Transverse colon (tissue), 4 donors: ENCODE measurements at regions of chr9 and their contacts with region 1.

Region 1: DNA sequence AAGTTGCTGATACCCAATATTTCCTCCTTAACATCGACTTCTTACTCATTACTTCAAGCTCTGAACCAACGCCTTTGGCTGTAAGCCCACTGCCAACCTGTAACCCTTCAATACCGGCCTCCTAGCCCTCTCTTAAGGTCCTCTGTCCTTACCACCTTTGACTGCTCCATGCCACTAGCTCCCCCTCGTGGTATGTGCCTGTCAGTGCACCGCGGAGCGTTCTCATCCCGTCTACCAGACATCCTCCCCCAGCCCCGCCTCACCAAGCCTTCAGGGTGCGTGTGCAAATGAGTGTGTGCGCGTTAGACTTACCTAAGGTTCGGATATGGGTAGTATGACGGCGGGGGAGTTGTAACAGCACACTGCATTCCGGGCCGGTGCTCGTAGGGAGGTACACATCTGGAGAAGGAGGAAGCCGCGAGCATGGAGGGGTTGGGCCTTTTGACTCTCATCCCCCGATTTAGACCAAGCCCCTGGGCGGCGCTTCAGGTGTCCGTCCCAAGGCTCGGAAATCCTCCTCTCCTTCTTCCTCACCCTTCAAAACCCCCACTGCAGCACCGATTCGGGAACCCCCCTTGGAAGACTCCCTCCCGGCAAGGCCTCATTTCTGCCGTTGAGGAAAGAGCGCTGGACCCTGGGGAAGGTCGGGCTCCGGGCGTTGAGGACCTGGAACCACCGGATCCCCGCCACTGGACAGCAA is 2.8 kb upstream of the MYORG start:
- DNase-seq: peak; percentile 94
- H3K4me3 ChIP-seq: peak overlapping the region; percentile 3 to 45 (median 28)
- H3K27ac ChIP-seq: peak overlapping the region; percentile 74 to 86 (median 78)
- H3K4me1 ChIP-seq: peaks cover 17 to 37% (median 31%) of the 10 kb centered on the region in 4 donors
- H3K27me3 ChIP-seq: no peaks in the 10 kb centered on the region
- CTCF ChIP-seq: peak; percentile 96 to 99 (median 98)
- EP300 ChIP-seq: no peak
- POLR2A ChIP-seq: peak; percentile 41

Region 2: DNA sequence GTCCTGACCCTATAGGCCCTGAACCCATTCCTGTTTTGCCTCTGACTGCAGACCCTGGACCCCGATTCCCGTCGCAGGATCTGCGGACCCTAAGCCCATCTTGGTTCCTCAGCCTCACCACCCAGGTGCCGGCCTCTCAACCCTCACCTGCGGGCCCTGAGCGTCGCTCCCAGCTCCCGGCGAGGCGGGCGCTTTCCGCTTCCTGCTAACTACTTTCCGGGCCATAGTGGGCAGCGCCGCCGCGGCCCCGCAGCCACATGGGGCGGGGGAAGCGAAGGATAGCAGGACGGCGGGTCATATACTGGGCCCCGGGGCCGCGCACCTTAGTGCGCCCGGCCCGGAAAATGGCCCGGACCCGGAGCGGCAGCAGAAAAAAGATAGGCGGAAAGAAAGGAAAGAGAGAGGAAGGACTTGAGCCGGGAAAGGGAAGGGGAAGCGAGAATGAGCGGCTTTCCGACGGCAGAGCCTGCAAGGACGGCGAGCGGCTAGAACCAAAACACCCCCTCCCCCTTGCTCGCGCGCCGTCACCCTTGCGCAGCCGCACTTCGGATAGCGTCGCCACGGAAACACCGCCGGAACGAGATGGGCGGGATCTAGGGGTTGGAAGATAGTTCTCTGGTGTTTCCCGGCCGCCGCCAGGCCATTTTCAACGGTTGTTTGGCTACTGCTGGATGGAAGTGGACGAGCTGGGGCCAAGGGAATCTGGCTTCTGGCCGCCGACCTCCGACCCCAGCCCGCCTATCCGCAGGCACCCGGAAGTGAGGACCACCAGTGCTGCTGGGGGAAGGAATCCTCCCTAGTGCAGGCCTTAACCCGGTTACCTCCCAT is 253.1 kb before region 1 on chr9 and contains the start of gene DCAF12:
- in situ Hi-C with region 1: no loop called
- intact Hi-C with region 1: loop called (anchors 5 kb)
- DNase-seq: peak; percentile 93
- H3K4me3 ChIP-seq: peak within 1 kb of the TSS; percentile 60 to 88 (median 77)
- H3K27ac ChIP-seq: peak within 1 kb of the TSS; percentile 90 to 97 (median 94)
- H3K4me1 ChIP-seq: peaks cover 12 to 38% (median 18%) of the 10 kb centered on the region in 4 donors
- H3K27me3 ChIP-seq: no peaks in the 10 kb centered on the region
- CTCF ChIP-seq: peak in 1 of 5 experiments; percentile 23
- EP300 ChIP-seq: no peak
- POLR2A ChIP-seq: peak; percentile 83
- total RNA-seq, gene DCAF12: 22.1 to 29.7 (median 26.3) TPM

Region 3: DNA sequence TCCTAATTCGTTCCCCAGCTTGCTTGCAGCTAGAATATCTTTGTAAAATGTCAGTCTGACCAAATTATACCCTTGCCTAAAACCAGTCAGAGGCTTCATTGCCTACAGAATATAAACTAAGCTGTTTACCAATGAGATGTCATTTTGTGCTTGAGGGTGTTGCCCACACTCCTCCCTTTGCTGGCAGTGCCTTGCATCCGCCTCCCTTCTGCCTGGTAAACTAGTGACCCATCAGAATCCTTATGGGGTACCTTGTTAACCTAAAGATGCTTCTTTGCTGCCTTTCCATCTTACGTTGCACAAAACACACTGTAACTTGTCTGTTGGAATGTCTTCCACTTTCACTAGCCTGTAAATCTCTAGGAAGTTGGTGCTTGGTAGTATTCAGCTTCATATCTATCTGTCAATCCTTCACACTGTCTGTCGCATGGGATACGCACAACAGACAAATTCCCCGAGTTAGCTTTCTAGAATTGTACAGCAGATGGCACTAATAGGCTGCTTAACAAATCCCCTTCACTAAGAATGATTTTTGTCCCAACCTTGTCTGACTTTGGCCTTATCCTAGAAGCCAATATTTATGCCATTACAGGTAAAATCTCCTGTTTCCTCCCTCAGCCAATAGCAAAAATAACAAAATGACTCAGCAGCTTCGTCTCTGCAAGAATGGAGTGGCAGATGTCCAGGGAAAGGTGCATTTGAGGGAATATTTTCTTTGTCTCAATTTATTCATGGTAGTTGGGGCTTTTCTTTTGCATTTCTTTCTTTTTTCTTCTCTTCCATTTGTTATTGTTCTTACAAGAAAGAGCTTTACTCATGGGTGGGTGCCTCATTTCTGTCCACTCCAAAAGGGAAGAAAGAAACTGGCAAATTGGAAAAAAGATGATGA is 47.2 kb before region 1 on chr9:
- in situ Hi-C with region 1: loop called in 1 of 4 experiments (anchors 10 kb)
- intact Hi-C with region 1: loop called (anchors 2 kb)
- DNase-seq: no peak
- H3K4me3 ChIP-seq: no peak overlapping the region
- H3K27ac ChIP-seq: peak overlapping the region in 1 of 4 donors; percentile 46
- H3K4me1 ChIP-seq: peaks cover 13 to 20% (median 14%) of the 10 kb centered on the region in 4 donors
- H3K27me3 ChIP-seq: no peaks in the 10 kb centered on the region
- CTCF ChIP-seq: peak; percentile 48 to 69 (median 54)
- EP300 ChIP-seq: no peak
- POLR2A ChIP-seq: no peak

Region 4: DNA sequence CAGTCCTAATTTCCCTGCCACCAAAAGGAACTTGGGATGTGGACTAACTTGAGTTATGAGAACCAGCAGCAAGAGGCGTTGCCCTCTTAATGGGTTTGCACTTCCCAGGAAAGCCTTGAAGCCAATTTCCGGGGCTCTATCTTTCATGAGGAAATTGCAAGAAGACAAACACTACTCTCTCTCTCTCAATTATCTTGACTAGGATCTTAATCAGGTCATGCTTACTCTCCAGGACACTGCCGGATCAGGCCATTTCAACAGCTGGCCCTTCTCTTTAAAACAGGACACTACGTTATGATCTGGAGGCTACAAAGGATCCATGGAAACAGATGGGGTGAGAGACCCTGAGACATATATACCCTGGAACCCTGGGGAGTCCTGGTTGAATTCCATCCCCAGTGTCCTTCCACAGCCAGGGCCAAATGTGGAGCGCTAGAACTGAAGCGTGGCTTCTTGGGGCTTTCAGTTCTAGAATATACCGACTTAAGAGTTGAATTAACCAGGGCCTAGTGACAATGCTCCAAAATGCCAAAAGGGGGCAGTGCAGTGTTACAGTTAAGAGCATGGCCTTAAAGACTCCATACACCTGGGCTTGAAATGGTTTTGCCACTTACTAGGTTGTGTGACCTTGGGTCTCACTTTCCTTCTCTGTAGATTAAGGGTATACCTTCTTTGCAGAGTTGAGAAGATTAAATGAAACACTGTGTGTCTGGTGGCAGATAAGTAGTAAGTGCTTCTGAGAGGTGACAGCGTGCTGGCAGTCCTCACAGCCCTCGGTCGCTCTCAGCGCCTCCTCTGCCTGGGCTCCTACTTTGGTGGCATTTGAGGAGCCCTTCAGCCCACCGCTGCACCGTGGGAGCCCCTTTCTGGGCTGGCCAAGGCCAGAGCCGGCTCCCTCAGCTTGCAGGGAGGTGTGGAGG is 57.8 kb after region 1 on chr9:
- in situ Hi-C with region 1: no loop called
- intact Hi-C with region 1: no loop called
- DNase-seq: peak; percentile 62
- H3K4me3 ChIP-seq: no peak overlapping the region
- H3K27ac ChIP-seq: no peak overlapping the region
- H3K4me1 ChIP-seq: peaks cover 0 to 7% (median 2%) of the 10 kb centered on the region in 4 donors
- H3K27me3 ChIP-seq: no peaks in the 10 kb centered on the region
- CTCF ChIP-seq: peak; percentile 68 to 78 (median 77)
- EP300 ChIP-seq: no peak
- POLR2A ChIP-seq: no peak

Region 5: GRCh38 chr9:34451545-34451944 is 72.1 kb after region 1 on chr9:
- in situ Hi-C with region 1: no loop called
- intact Hi-C with region 1: no loop called
- DNase-seq: no peak
- H3K4me3 ChIP-seq: no peak overlapping the region
- H3K27ac ChIP-seq: no peak overlapping the region
- H3K4me1 ChIP-seq: peaks cover 0 to 10% (median under 1%) of the 10 kb centered on the region in 4 donors
- H3K27me3 ChIP-seq: no peaks in the 10 kb centered on the region
- CTCF ChIP-seq: no peak
- EP300 ChIP-seq: no peak
- POLR2A ChIP-seq: no peak